Transverse colon (tissue), 4 donors: ENCODE measurements at regions of chr19 and their contacts with region 1.

Region 1: DNA sequence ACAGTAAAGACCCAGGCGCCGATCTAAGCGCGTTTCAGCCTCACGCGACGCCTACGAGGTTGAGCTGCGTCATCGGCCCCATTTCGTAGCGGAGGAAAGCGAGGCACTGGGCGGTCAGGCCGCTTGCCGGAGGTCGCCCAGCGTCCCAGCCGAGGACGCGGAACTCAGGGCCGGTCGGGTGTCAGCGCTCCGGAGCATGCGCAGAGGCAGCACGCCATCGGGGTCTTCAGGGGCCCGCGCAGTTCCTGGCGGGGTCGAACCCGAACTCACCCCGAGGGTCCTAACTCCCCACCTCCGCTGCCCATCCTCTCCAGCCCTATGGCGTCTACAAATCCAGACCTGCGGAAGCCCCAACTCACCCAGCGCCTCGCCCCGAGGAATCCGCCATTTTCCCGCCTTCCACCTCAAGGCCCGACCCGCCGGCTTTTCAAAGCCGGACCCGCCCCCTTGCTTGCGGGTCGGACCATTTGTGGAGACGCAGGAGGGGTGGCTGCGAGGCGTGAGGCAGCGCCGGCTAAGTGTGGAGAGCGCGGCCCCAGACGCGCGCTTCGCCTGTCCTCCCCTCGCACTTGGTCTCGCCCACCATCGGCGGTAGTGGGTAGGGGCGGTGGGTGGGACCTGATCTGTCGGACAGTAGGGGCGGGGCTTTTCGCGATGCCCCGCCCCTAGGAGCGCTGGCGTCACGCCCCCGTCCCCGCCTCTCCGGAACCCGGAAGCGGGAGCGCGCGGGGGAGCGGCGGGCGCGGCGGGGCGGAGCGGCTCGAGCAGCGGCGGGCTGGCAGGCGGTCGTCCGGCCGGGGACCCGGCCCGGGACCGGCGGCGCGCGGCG is at the starts of genes HAUS8 and MYO9B:
- DNase-seq: peak; percentile 100
- H3K4me3 ChIP-seq: peak within 1 kb of the TSS; percentile 77 to 95 (median 94)
- H3K27ac ChIP-seq: peak within 1 kb of the TSS; percentile 90 to 95 (median 93)
- H3K4me1 ChIP-seq: peaks cover 24 to 51% (median 42%) of the 10 kb centered on the region in 4 donors
- H3K27me3 ChIP-seq: no peaks in the 10 kb centered on the region
- CTCF ChIP-seq: no peak
- EP300 ChIP-seq: no peak
- POLR2A ChIP-seq: no peak
- total RNA-seq, gene HAUS8: 4.4 to 13.8 (median 10.3) TPM
- total RNA-seq, gene MYO9B: 102 to 246 (median 151) TPM

Region 2: DNA sequence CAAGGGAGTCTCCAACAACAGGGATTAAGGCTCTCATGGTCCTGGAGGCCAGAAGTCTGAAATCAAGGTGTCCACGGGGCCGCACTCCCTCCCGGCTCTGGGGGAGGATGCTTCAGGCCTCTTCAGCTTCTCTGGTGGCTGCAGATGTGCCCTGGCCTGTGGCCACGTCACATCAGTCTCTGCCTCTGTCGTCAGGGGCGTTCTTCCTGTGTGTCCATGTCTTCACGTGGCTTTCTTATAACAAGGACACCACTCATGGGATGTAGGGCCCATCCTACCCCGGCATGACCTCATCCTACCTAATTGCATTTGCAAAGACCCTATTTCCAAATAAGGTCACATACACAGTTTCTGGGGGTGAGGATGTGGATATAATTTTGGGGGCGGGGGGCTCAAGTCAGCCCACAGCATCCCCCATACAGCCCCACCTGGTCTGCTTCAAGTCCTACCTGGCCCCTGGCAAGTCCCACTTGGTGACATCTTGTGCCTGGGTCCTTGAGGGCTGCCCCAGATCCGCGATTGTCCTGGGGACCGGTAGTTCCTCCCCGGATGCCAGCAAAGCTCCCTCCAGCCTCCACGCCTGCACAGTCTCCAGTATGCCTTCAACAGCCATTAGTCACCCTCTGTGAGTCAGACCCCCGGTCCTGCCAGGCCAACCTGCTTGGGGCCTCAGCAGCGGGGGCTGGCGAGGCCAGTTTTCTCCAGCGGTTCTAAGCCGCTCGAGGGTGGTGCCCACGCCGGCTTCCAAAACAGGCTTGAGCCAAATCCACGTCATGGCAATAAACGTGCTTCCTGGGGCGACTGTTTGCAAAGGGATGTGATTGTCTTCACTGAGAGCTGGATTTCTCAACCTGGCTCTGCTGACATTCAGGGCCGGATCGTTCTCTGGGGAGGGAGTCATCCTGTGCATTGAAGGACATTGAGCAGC is 32.5 kb after region 1 on chr19:
- in situ Hi-C with region 1: no loop called
- intact Hi-C with region 1: loop called (anchors 1 kb)
- DNase-seq: peak; percentile 77
- H3K4me3 ChIP-seq: no peak overlapping the region
- H3K27ac ChIP-seq: peak overlapping the region; percentile 79 to 92 (median 84)
- H3K4me1 ChIP-seq: peaks cover 18 to 32% (median 19%) of the 10 kb centered on the region in 4 donors
- H3K27me3 ChIP-seq: no peaks in the 10 kb centered on the region
- CTCF ChIP-seq: no peak
- EP300 ChIP-seq: peak; percentile 14
- POLR2A ChIP-seq: no peak

Region 3: GRCh38 chr19:17135001-17135853 is 60.0 kb after region 1 on chr19:
- in situ Hi-C with region 1: no loop called
- intact Hi-C with region 1: loop called (anchors 10 kb)
- DNase-seq: peak; percentile 80
- H3K4me3 ChIP-seq: no peak overlapping the region
- H3K27ac ChIP-seq: peak overlapping the region; percentile 87 to 89 (median 88)
- H3K4me1 ChIP-seq: peaks cover 9 to 22% (median 12%) of the 10 kb centered on the region in 4 donors
- H3K27me3 ChIP-seq: no peaks in the 10 kb centered on the region
- CTCF ChIP-seq: peak in 1 of 5 experiments; percentile 13
- EP300 ChIP-seq: no peak
- POLR2A ChIP-seq: no peak